ENCODE measurements at regions of chr3 and their contacts with region 1.

Region 1: GRCh38 chr3:183178629-183179549 is 16.4 kb upstream of the LAMP3 start:
- DNase-seq: peak in 1 of 2 experiments; percentile 77
- H3K4me3 ChIP-seq: peak overlapping the region; percentile 43 to 66 (median 56)
- H3K27ac ChIP-seq: no peak overlapping the region
- H3K4me1 ChIP-seq: peaks cover 0 to 8% (median 1%) of the 10 kb centered on the region in 4 experiments; a peak in 3 of 7 replicates
- H3K27me3 ChIP-seq: peaks cover 0 to 25% (median 20%) of the 10 kb centered on the region in 4 experiments; a peak in 6 of 7 replicates
- CTCF ChIP-seq: peak; percentile 23 to 30 (median 25); a peak in 3 of 4 replicates
- EP300 ChIP-seq: no peak
- POLR2A ChIP-seq: no peak
- RAD21 ChIP-seq: peak in 1 of 2 experiments; percentile 40; a peak in 1 of 4 replicates

Region 2: GRCh38 chr3:183116025-183116614 is 62.8 kb before region 1 on chr3:
- CTCF ChIA-PET with region 1: interaction called, 10 read pairs
- POLR2A ChIA-PET with region 1: no interaction called
- DNase-seq: peak; percentile 90 to 91
- H3K4me3 ChIP-seq: peak overlapping the region; percentile 23 to 60 (median 54)
- H3K27ac ChIP-seq: no peak overlapping the region
- H3K4me1 ChIP-seq: peaks cover 10 to 17% (median 14%) of the 10 kb centered on the region in 4 experiments
- H3K27me3 ChIP-seq: peaks cover 0 to 8% (median 5%) of the 10 kb centered on the region in 4 experiments; a peak in 3 of 7 replicates
- CTCF ChIP-seq: no peak
- EP300 ChIP-seq: peak in 1 of 2 experiments; percentile 75; a peak in 1 of 3 replicates
- POLR2A ChIP-seq: no peak
- RAD21 ChIP-seq: no peak

Region 3: GRCh38 chr3:183122257-183122932 is 56.5 kb before region 1 on chr3:
- CTCF ChIA-PET with region 1: interaction called, 28 read pairs
- POLR2A ChIA-PET with region 1: no interaction called
- DNase-seq: no peak
- H3K4me3 ChIP-seq: no peak overlapping the region
- H3K27ac ChIP-seq: no peak overlapping the region
- H3K4me1 ChIP-seq: no peaks in the 10 kb centered on the region
- H3K27me3 ChIP-seq: peaks cover 0 to 1% (median under 1%) of the 10 kb centered on the region in 4 experiments; a peak in 3 of 7 replicates
- CTCF ChIP-seq: peak in 2 of 3 experiments; percentile 55 to 73; a peak in 2 of 4 replicates
- EP300 ChIP-seq: no peak
- POLR2A ChIP-seq: no peak
- RAD21 ChIP-seq: peak; percentile 84 to 89

Region 4: GRCh38 chr3:183158551-183159006 is 20.3 kb before region 1 on chr3:
- CTCF ChIA-PET with region 1: interaction called, 16 read pairs
- POLR2A ChIA-PET with region 1: no interaction called
- DNase-seq: no peak
- H3K4me3 ChIP-seq: no peak overlapping the region
- H3K27ac ChIP-seq: no peak overlapping the region
- H3K4me1 ChIP-seq: peaks cover 0 to 8% (median 2%) of the 10 kb centered on the region in 4 experiments; a peak in 2 of 7 replicates
- H3K27me3 ChIP-seq: peaks cover 3 to 25% (median 20%) of the 10 kb centered on the region in 4 experiments
- CTCF ChIP-seq: no peak
- EP300 ChIP-seq: no peak
- POLR2A ChIP-seq: no peak
- RAD21 ChIP-seq: no peak

Region 5: GRCh38 chr3:183385698-183386613 is 207.1 kb after region 1 on chr3:
- CTCF ChIA-PET with region 1: interaction called, 222 read pairs
- POLR2A ChIA-PET with region 1: interaction called, 5 read pairs
- DNase-seq: peak in 1 of 2 experiments; percentile 72
- H3K4me3 ChIP-seq: no peak overlapping the region
- H3K27ac ChIP-seq: no peak overlapping the region
- H3K4me1 ChIP-seq: peaks cover 0 to 19% (median 4%) of the 10 kb centered on the region in 4 experiments; a peak in 3 of 7 replicates
- H3K27me3 ChIP-seq: no peaks in the 10 kb centered on the region
- CTCF ChIP-seq: peak; percentile 5 to 83 (median 74)
- EP300 ChIP-seq: no peak
- POLR2A ChIP-seq: no peak
- RAD21 ChIP-seq: peak; percentile 81 to 88

Region 6: DNA sequence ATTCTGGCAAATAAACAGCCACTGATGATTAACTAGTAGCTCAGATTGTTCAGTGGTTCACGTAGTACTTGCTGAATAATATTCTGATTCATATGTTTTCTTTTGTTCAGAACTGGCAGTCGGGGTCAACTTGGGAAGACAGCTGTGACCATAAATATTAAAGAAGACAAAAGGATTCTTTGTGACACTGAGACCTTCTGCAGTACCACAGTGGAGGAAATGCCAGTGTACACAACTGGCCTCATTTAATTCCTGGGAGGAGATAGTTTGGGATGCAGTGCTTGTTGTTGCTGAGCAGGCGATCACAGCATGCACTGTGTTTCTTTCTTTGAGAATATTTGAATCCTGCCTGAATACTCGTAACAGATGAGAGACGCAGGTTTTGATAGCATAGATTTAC is 276.2 kb after region 1 on chr3:
- CTCF ChIA-PET with region 1: no interaction called
- POLR2A ChIA-PET with region 1: no interaction called
- DNase-seq: no peak
- H3K4me3 ChIP-seq: no peak overlapping the region
- H3K27ac ChIP-seq: no peak overlapping the region
- H3K4me1 ChIP-seq: no peaks in the 10 kb centered on the region
- H3K27me3 ChIP-seq: no peaks in the 10 kb centered on the region
- CTCF ChIP-seq: no peak
- EP300 ChIP-seq: no peak
- POLR2A ChIP-seq: no peak
- RAD21 ChIP-seq: no peak

Measured in H1 (cell line).